ENCODE measurements at regions of chr14 and their contacts with region 1.

Region 1: DNA sequence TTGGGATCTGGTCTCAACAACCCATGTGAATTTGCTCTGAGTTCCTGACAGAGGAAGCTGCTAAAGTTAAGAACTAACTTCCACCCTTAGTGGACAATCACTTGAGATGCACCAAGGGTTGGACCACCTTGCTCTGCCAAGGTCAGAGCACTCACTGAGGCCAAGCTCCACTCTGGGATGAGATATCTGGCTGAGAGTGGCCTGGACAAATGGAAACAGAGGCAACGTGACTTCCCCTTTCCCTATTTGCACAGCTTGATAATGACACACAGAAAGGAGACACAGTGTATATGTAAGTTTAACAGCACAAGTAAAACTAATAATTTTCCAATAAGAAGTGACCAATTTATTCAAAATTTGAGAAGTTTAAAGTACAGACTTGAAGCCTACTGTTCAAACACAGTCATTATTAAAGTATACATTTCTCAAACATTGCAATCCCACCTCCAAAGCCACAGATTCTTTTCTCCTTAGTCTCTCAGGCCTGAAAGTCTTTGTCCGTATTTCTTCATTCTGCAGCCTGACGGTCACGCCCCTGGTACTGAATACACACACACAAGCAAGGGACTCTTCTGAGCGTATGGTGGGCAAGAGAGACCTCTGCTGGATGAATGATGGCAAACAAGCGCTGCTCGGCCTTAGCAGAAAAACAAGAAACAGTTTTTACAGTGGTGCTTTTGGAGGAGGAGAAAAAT is 28.6 kb downstream of the TMEM30B start:
- DNase-seq: peak; percentile 68
- ATAC-seq: peak; percentile 98

Region 2: DNA sequence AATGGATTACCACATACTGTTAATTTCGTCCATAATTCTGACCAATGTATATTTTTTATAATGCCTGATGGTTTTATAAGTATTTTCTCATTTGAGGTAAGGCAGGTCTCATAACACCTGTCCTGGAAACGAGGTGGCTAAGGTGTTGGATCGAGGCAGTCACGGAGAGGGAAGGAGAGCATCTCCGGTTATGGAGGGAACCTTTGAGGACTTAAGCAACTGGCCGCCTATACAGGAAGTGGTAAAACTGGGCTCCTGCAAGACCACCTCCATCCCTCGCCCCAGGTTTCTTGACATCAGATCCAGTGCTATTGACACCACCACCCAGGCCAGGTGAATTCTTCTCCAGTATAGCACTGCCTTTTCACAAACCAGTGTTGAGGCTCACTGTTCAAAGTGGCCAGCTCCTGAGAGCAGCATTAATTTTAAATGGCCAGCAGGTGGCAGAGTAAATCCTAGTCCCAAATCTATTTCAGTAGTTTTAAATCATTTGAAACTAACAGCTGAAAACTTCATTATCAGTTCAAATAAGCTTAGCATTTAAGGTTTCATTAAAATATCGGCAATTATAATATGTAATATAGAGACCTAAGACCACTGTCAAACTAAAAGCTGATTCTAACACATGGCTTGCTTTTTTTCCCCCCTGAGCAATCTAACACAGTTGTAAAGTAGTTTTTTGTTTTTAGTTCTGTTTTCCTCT is 902.7 kb before region 1 on chr14:
- intact Hi-C with region 1: loop called (anchors 2 kb)
- DNase-seq: no peak
- ATAC-seq: peak; percentile 81

Region 3: GRCh38 chr14:60628892-60629291 is 623.6 kb before region 1 on chr14:
- intact Hi-C with region 1: loop called (anchors 5 kb)
- DNase-seq: no peak
- ATAC-seq: no peak

Region 4: GRCh38 chr14:61025251-61026223 is 227.0 kb before region 1 on chr14:
- intact Hi-C with region 1: loop called (anchors 10 kb)
- DNase-seq: peak; percentile 54
- ATAC-seq: peak; percentile 76

Region 5: DNA sequence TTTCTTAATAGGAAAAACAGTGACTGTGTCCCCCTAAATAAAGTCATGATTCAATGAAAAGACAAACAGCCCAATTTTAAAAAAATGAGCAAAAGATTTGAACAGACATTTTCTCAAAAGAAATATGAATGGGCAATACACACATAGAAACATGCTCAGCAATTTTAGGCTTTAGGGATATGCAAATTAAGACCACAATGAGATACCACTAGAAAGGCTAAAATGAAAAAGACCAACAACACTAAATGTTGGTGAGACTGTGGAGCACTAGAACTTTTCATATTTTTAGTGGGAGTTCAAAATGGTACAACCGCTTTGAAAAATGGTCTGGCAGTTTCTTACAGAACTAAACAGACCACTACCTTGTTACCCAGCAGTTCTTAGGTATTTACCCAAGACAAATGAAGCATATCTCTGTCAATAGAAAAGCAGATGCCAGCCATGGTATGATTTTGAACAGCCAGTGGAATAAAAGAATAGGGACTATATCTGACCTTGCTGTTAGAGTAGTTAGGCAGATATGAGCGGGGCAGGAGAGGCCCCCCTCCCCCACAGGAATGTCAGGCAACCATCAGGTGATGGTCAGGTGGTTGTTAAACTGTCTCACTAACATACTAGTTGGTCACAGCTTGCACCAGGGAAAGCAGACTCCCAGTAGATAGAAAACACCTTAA is 177.7 kb after region 1 on chr14:
- intact Hi-C with region 1: no loop called
- DNase-seq: no peak
- ATAC-seq: no peak

Region 6: DNA sequence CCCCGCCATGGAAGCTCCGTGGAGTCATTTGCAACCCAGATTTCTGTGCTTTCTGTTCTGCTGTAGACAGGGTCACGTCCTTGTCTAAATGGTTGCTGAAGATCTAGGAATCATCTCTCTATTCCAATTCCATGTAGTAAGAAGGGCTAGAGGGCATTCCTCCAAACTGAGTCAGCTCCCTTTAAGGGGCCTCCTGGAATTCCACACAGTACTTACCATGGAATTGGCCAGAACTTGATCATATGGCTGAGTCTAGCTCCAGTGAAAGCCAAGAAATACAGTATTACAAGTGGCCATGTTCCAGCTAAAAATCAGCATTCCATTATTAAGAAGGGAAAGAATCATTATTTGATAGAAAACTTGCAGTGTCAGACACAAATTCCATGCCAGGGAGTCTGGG is 240.7 kb after region 1 on chr14:
- intact Hi-C with region 1: no loop called
- DNase-seq: no peak
- ATAC-seq: no peak

Measured in Right ventricle myocardium superior (tissue), 1 donor.